Posterior vena cava (tissue), 2 donors: ENCODE measurements at regions of chr19 and their contacts with region 1.

Region 1: GRCh38 chr19:51338563-51339312 is 3.2 kb downstream of the VSIG10L start:
- DNase-seq: peak; percentile 94

Region 2: DNA sequence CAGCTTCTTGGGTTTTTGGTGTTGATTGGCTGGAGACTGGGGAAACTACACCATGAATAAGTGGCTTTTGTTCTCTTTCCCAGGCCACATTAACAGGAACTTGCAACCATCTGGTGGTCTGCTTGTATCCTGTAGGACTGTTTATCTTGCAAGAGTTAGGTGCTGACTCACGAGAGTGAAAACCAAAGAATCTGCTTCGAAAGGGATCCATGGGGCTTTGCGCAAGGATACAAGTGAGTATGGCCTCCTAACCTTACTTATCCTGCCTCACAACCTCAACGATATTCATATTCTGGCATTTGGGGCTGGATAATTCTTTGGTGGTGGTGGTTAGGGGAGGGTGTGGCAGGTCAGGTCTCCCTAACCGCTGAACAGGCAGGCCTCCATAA is 92.6 kb before region 1 on chr19:
- intact Hi-C with region 1: no loop called
- DNase-seq: no peak

Region 3: DNA sequence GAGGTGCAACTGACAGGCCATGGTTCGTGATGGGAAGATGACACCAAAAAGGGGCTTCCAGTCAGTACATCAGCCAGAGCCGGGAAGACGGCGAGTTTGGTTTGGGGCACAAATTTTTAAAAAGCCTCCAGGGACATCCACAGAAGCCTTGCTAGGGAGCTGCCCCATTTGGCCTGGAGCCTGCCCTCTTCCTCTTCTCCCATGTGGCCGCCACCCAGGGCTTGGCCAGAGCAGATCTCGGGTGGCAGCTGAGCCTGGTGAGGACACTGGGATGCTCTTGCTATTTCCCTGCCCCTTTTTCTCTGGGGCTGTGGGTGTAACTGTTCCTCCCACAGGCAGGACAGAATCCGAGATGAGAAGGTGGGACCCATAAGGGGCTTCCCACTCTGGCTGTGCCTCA is 19.2 kb after region 1 on chr19:
- intact Hi-C with region 1: loop called in 1 of 2 experiments (anchors 2 kb)
- DNase-seq: no peak

Region 4: DNA sequence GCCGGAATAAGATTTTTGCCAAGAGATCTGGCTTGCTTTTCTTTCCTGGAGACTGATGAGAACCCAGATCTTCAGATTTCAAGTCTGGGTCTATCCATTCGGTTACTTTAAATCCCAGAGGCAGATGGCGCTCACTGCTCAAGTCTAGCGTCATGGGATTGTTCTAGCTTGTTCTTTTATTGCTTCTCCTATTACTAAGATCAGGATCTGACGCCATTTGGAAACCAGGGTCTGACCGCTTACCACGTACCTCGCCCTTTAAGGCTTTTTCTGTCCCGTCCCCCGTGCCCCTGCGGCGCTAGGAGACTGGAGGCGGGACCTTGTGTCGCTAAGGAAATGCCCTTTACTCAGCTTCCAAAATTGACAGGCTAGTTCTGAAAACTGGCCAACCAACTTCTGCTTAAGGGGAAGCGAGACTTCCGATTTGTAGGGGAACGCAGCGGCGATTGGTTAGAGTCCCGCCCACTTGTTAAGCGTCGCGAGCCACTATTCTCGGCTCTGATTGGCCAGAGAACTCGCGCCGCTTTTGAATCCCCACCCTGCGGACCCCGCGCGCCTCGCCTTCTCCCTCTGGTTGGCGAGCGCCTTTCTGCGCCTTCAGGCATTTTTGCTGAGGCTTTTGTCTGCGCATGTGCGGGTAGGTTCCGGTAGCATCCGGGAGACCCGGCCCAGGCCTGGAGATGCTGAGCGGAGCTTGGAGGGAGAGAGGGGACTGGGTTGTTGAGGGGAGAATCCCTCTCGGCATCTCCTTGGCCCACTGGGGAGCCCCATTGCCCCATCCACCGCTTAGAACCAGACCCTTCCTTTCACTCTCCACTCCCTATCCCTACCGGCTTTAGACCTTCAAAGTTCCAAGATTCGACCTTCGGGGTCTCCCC is 55.5 kb after region 1 on chr19:
- intact Hi-C with region 1: loop called in 1 of 2 experiments (anchors 10 kb)
- DNase-seq: peak; percentile 98

Region 5: GRCh38 chr19:51439021-51439465 is 100.3 kb after region 1 on chr19:
- intact Hi-C with region 1: loop called in 1 of 2 experiments (anchors 5 kb)
- DNase-seq: no peak